Activated CD4-positive, alpha-beta T cell treated with anti-CD3 and anti-CD28 coated beads for 36 hours (primary cell): ENCODE measurements at regions of chr15 and their contacts with region 1.

Region 1: DNA sequence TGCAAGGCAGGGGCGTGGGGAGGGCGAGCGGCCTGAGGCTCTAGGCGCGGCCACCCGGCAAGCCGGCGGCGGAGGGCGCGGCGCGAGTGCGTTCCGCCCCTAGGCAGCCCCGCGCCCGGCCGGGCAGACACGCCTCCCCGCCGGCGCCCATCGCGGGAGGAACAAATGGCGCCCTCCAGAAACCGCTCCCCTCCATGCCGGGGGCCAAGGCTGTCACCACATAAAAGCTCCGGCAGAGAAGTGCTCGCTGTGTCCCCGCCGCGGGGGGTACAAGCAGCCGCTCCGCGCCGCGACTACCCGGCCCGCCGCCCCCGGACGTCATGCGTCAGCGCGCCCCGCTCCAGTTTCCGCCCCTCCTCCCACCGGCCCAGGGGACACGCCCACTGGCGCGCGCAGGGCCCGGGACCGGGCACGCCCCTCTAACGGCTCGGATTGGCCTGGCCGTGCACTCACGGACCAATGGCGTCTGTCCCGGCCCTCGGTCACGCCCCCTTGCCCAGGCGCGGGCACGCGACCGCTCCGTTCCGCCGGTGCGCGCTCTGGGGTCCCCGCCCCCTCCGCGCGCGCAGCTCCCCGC is 391 bp upstream of the KLF13 start:
- DNase-seq: peak; percentile 100
- ATAC-seq: peak; percentile 83
- H3K4me3 Mint-ChIP-seq: peak overlapping the region; percentile 85
- H3K27ac Mint-ChIP-seq: no peak overlapping the region
- H3K4me1 Mint-ChIP-seq: peaks cover 37% of the 10 kb centered on the region
- H3K27me3 Mint-ChIP-seq: no peaks in the 10 kb centered on the region

Region 2: DNA sequence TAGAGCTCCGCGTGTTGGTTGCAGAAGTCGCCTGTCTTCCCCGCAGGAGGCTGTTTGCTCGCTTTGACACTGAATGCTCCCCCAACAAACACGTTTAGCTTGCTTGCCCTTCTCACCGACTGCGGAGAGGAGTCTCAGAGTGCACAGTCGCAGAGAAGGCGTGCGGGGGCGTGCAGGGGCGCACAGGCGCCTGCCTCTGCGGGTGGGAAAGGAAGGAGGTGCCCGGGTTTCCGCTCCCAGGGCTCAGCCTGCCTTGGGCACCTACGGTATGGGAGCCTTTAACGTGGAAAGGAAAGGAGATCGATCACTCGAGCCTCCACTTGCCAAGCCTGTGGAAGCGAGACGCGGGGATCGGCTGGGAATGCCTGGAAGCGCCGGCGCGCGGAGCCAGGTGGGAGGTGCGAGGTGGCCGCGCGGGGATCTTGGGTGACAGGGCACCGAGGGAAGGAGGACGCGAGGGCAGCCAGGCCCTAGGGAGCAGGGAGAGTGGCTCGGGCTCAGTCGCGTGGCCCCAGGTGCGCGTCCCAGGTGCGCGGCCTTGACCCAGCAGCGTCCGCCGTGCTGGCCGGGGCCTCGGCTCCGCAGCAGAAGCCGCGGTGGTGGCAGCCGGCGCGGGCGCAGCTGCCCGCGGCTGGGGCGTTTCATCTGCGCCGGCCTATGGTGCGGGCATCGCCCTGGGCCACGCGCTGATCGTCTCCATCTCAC is 422.6 kb before region 1 on chr15 and contains the start of gene FAN1:
- CTCF ChIA-PET with region 1: no interaction called
- POLR2A ChIA-PET with region 1: no interaction called
- intact Hi-C with region 1: loop called in 1 of 2 experiments (anchors 10 kb)
- DNase-seq: peak; percentile 89
- ATAC-seq: peak; percentile 94
- H3K4me3 Mint-ChIP-seq: peak within 1 kb of the TSS; percentile 95
- H3K27ac Mint-ChIP-seq: peak within 1 kb of the TSS; percentile 89
- H3K4me1 Mint-ChIP-seq: peaks cover 23% of the 10 kb centered on the region
- H3K27me3 Mint-ChIP-seq: peaks cover 3% of the 10 kb centered on the region
- total RNA-seq, gene FAN1: 11.6 to 15.4 TPM

Region 3: DNA sequence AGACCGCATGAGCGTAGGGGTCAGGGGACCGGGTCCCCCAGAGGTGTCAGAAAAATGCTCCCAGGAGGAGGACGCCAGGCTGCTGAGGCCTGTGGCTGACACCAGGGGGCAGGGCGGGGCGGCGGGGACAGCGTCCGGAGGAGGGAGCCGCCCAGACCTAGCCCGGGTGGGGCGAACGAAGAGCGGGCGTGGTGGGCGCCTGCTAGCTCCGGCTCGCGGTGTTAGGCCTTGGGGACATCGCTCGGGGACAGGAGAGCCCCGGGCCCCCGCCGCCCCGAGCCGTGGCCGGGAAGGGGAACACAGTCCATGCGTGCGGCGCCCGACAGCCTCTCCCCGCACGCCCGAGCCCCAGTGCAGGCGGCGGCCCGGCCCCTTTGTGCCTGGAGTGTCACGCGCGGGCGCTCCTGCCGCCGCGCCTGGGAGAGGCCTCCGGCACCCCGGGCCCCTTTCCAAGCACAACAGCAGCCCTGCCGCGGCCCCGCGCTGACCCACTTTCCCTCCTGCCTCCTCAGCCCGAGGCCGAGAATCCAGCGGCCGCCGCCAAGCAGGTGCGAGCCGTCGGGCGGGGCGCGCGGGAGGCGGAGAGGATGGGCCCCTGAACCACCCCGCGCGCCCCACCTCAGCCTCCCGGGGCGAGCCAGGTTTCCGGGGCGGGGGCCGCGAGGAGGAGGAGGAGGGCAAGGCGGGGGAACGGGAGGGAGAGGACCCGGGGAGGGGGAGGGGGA is 110.6 kb before region 1 on chr15:
- CTCF ChIA-PET with region 1: interaction called, 7 read pairs
- POLR2A ChIA-PET with region 1: interaction called, 4 read pairs
- intact Hi-C with region 1: loop called (anchors 1 kb)
- DNase-seq: peak; percentile 93
- ATAC-seq: peak; percentile 89
- H3K4me3 Mint-ChIP-seq: peak overlapping the region; percentile 72
- H3K27ac Mint-ChIP-seq: peak overlapping the region; percentile 56
- H3K4me1 Mint-ChIP-seq: peaks cover 17% of the 10 kb centered on the region
- H3K27me3 Mint-ChIP-seq: no peaks in the 10 kb centered on the region

Region 4: DNA sequence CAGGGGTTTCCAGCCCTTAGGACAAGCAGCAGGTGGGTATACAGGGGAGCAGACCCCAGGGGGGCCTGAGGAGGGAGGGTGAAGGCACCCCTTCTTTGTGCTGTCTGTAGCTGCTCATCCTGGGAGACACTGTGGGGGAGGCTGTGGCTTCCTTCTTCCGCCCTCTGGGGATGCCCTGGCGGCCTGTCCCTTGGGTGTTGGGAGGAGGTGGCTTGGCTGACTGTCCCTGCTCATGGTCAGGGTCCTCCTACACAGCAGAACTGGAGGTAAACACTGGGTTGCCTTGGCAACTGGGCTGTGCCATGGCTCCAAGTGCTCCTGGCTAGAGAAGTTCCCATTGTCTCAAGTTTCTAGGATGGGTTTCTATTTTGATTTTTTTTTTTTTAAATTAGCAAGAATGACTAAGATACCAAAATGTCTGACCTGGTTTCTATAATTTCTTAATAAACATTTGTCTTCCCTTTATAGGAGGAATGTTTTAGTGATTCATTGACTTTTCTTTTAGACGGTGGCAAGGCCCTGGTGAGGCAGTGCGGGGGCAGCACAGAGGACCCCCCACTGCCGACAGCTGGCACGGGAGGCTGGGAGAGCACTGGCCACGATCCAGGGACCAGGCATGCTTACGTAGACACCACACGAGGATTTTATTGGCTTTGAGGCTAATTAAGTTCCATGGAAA is 12.8 kb after region 1 on chr15:
- CTCF ChIA-PET with region 1: interaction called, 4 read pairs
- POLR2A ChIA-PET with region 1: interaction called, 3 read pairs
- intact Hi-C with region 1: loop called (anchors 1 kb)
- DNase-seq: peak; percentile 74
- ATAC-seq: peak; percentile 42
- H3K4me3 Mint-ChIP-seq: peak overlapping the region; percentile 20
- H3K27ac Mint-ChIP-seq: peak overlapping the region; percentile 71
- H3K4me1 Mint-ChIP-seq: peaks cover 100% of the 10 kb centered on the region
- H3K27me3 Mint-ChIP-seq: no peaks in the 10 kb centered on the region

Region 5: GRCh38 chr15:31365655-31366127 is 39.4 kb after region 1 on chr15:
- CTCF ChIA-PET with region 1: interaction called, 7 read pairs
- POLR2A ChIA-PET with region 1: interaction called, 4 read pairs
- intact Hi-C with region 1: loop called (anchors 1 to 2 kb)
- DNase-seq: peak; percentile 92
- ATAC-seq: peak; percentile 68
- H3K4me3 Mint-ChIP-seq: peak overlapping the region; percentile 61
- H3K27ac Mint-ChIP-seq: peak overlapping the region; percentile 96
- H3K4me1 Mint-ChIP-seq: peaks cover 99% of the 10 kb centered on the region
- H3K27me3 Mint-ChIP-seq: no peaks in the 10 kb centered on the region

Region 6: GRCh38 chr15:31483053-31483985 is 157.1 kb after region 1 on chr15:
- CTCF ChIA-PET with region 1: interaction called, 13 read pairs
- POLR2A ChIA-PET with region 1: no interaction called
- intact Hi-C with region 1: loop called (anchors 1 to 2 kb)
- DNase-seq: peak; percentile 84
- ATAC-seq: peak; percentile 80
- H3K4me3 Mint-ChIP-seq: peak overlapping the region; percentile 85
- H3K27ac Mint-ChIP-seq: peak overlapping the region; percentile 94
- H3K4me1 Mint-ChIP-seq: peaks cover 60% of the 10 kb centered on the region
- H3K27me3 Mint-ChIP-seq: peaks cover 3% of the 10 kb centered on the region